Left cardiac atrium (tissue), 4 donors: ENCODE measurements at regions of chr9 and their contacts with region 1.

Region 1: DNA sequence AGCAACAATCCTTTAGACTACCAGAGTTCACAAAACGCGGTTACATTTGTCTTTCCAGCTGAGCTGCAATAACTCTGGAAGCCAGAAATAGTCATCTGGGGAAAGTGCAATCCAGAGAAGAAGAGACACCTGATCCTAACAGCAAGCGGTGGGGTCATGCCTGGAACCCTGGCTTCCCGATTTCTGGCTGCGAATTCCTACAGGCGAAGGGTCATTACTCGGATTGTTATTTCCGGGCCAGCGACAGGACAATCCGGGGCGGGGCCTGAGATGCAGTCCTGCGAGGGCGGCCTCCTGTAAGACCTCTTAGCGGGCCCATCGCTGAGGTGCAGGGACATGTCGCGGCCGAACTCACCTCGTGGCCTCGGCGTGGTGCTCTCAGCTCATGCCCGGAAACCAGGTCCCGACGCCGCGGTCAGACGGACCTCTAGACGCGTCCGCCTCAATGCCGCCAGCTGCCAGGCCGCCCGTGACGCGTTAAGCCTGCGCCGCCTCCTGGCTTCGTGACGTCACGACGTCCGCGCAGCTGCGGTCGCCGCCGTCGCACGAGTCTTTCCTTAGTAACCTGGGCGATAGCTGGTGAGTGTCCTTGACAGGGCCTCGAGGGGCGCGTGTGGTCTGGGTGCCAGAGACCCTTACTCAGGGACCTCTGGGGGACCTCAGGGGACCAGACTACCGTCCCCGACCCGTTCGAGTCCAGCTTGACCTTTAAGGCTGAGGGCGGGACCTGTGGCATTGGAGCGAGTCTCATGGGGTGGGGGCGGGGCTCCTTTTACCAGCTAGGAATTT is at the starts of genes MRRF and RBM18:
- DNase-seq: peak; percentile 93
- ATAC-seq: peak; percentile 94 to 97
- total RNA-seq, gene MRRF: 32.1 to 32.9 TPM
- total RNA-seq, gene RBM18: 30.3 to 32.5 TPM

Region 2: GRCh38 chr9:122159026-122159924 is 105.3 kb before region 1 on chr9 and contains the starts of genes MORN5 and NDUFA8:
- intact Hi-C with region 1: loop called in 1 of 2 experiments (anchors 10 kb)
- DNase-seq: peak; percentile 98
- ATAC-seq: peak; percentile 99
- total RNA-seq, gene MORN5: not detected
- total RNA-seq, gene NDUFA8: 198 to 221 TPM

Region 3: DNA sequence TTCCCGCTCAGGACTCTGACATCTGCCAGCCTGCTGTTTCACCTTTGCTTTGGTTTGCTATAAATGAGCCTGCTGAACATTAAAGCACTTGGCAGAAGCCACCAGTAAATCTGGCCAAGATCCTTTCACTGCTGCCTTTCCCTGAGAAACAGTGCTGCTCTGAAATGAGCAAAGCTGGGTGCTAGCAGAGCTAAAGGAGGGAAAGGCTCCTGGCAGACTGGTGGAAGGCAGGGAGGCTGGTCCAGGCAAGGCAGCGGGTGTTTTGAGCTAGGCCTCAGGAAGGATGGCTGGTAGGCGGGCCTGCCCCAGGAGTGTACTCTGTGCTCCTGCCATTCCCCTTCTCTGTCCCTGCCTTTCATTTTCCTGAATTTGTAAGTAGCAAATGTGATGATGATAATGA is 53.7 kb after region 1 on chr9:
- intact Hi-C with region 1: loop called in 1 of 2 experiments (anchors 10 kb)
- DNase-seq: no peak
- ATAC-seq: peak; percentile 17 to 57